ENCODE measurements at regions of chr10 and their contacts with region 1.

Region 1: GRCh38 chr10:7410862-7411670 is at the start of gene SFMBT2:
- DNase-seq: peak; percentile 77
- H3K4me3 ChIP-seq: peak within 1 kb of the TSS; percentile 64
- H3K27ac ChIP-seq: peak within 1 kb of the TSS; percentile 30
- H3K4me1 ChIP-seq: peaks cover 22% of the 10 kb centered on the region
- H3K27me3 ChIP-seq: peaks cover 88% of the 10 kb centered on the region
- CTCF ChIP-seq: no peak
- total RNA-seq, gene SFMBT2: 8.2 and 11.8 TPM in 2 replicates

Region 2: DNA sequence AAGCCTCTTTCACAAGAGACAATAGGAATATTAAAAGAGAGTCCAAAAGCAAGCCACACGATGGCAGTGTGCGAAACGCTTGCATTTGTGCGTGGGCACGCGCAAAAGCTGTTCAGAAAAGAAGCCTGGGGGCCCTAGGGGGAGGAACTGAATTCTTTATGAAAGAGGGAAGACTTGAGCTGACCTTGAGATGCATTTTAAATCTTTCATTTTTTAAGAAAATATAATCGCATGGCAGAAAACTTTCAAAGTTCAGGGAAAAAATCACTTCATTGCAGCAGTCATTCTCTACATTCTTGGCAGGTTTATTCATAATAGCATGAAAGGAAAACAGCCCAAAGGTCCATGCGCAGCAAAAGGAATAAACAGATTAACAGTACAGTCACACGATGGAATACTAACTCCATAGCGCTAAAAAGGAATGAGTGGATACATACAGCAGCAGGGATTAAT is 624.5 kb before region 1 on chr10:
- CTCF ChIA-PET with region 1: no interaction called
- POLR2A ChIA-PET with region 1: no interaction called
- intact Hi-C with region 1: loop called (anchors 10 kb)
- DNase-seq: peak; percentile 81
- H3K4me3 ChIP-seq: no peak overlapping the region
- H3K27ac ChIP-seq: no peak overlapping the region
- H3K4me1 ChIP-seq: peaks cover 44% of the 10 kb centered on the region
- H3K27me3 ChIP-seq: no peaks in the 10 kb centered on the region
- CTCF ChIP-seq: peak; percentile 82

Region 3: GRCh38 chr10:6920072-6921019 is 490.7 kb before region 1 on chr10:
- CTCF ChIA-PET with region 1: interaction called, 3 read pairs
- POLR2A ChIA-PET with region 1: no interaction called
- intact Hi-C with region 1: loop called (anchors 5 kb)
- DNase-seq: peak; percentile 84
- H3K4me3 ChIP-seq: no peak overlapping the region
- H3K27ac ChIP-seq: no peak overlapping the region
- H3K4me1 ChIP-seq: no peaks in the 10 kb centered on the region
- H3K27me3 ChIP-seq: peaks cover 4% of the 10 kb centered on the region
- CTCF ChIP-seq: peak; percentile 82

Region 4: GRCh38 chr10:7260412-7260900 is 150.6 kb before region 1 on chr10:
- CTCF ChIA-PET with region 1: no interaction called
- POLR2A ChIA-PET with region 1: interaction called, 9 read pairs
- intact Hi-C with region 1: loop called (anchors 2 kb)
- DNase-seq: peak; percentile 89
- H3K4me3 ChIP-seq: no peak overlapping the region
- H3K27ac ChIP-seq: no peak overlapping the region
- H3K4me1 ChIP-seq: peaks cover 12% of the 10 kb centered on the region
- H3K27me3 ChIP-seq: no peaks in the 10 kb centered on the region
- CTCF ChIP-seq: peak; percentile 68

Measured in A673 (cell line).